Activated naive CD4-positive, alpha-beta T cell treated with anti-CD3 and anti-CD28 coated beads for 36 hours (primary cell): ENCODE measurements at regions of chr14 and their contacts with region 1.

Region 1: GRCh38 chr14:50060871-50061663 is 55.3 kb downstream of the VCPKMT start:
- DNase-seq: peak; percentile 64
- H3K4me3 Mint-ChIP-seq: peak overlapping the region; percentile 85
- H3K27ac Mint-ChIP-seq: peak overlapping the region; percentile 98
- H3K4me1 Mint-ChIP-seq: peaks cover 75% of the 10 kb centered on the region
- H3K27me3 Mint-ChIP-seq: no peaks in the 10 kb centered on the region

Region 2: DNA sequence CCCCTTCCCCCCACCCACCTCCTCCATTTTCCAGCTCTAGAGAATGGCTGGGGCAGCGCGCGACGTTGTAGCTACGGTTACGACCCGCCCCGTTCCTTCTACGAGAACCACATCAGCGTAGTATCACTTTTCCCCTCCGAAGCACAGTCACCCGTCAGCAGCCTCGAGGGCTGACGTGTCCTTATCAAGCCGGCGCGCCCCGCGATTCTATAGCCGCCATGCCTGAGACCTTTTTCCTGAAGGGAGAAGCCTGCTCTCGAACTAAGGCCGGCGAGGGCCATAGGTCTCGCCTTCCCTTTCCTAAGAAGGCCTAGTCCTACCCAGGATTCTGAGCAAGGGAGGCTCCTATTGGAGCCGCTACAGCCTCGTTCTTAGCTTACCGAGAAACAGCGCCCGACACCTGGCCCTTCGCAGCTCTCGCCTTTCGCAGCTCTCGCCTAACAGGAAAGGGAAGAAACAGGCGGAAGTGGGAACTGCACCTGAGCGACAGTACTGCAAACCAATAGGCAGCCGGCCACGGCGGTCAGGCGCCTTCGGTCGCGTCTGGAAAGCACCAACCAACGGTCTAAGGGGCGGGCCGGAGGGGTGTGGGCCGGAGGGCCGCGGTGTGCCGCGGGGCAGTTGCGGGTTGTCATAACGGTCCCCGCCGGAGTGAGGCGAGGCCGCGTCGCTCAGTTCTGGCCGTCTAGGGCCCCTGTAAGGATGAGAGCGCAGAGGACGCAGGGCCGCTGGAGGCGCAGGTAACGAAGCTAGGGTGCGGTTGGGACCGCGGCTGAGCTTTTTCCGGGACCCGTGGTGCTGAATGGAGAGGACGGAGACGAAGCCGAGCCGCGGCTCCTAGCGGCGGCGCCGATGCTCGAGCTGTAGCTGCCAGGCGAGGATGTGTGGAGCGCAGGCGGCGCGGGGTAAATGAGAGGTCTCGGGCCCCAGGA is 440.6 kb before region 1 on chr14 and contains the starts of genes MGAT2 and RPL36AL:
- CTCF ChIA-PET with region 1: no interaction called
- intact Hi-C with region 1: loop called (anchors 5 kb)
- DNase-seq: peak; percentile 97
- H3K4me3 Mint-ChIP-seq: peak within 1 kb of the TSS; percentile 97
- H3K27ac Mint-ChIP-seq: peak within 1 kb of the TSS; percentile 97
- H3K4me1 Mint-ChIP-seq: peaks cover 52% of the 10 kb centered on the region
- H3K27me3 Mint-ChIP-seq: no peaks in the 10 kb centered on the region
- total RNA-seq, gene MGAT2: 20.6 to 20.7 TPM
- total RNA-seq, gene RPL36AL: 250 to 266 TPM

Region 3: GRCh38 chr14:49879683-49880204 is 181.3 kb before region 1 on chr14:
- CTCF ChIA-PET with region 1: no interaction called
- intact Hi-C with region 1: loop called (anchors 1 kb)
- DNase-seq: peak; percentile 79
- H3K4me3 Mint-ChIP-seq: no peak overlapping the region
- H3K27ac Mint-ChIP-seq: peak overlapping the region; percentile 30
- H3K4me1 Mint-ChIP-seq: peaks cover 17% of the 10 kb centered on the region
- H3K27me3 Mint-ChIP-seq: no peaks in the 10 kb centered on the region

Region 4: DNA sequence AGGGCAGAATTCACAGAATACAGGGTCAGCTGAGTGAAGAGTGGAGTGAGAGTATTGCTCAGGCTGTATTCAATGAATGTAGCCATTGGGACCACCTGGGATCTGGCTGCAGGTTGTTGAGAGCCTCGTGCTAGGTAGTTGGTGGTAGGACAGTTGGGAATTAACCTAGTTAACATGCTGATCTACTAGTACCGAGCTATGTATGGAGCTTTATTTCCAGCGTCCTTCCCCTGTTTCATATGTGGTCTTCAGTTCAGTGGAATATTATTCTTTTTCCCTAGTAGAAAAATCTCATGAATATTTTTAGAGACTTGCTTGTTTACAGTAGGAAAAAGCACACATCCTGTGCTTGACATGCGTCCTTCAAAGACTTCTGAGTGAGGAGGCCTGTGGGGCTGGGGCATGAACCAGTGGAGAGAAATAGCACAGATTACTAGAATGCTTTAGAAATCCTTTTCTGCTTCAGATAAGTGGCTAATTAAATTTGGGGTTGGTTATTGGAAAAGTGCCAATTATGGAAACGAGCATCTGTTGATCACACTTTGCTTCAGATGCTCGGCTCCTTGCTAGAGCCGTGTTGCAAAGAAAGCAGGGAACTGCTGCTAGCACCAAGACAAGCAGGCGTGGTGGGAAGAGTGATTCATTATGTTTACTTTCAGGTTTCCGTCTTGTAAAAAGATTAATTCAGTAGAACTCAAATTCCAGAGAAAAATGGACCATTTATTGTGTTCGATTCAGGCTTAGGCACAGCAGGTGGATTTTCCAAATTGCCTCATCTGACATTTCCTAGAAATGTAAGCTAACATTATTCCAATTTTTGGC is 114.5 kb before region 1 on chr14:
- CTCF ChIA-PET with region 1: no interaction called
- intact Hi-C with region 1: loop called (anchors 1 kb)
- DNase-seq: peak; percentile 51
- H3K4me3 Mint-ChIP-seq: peak overlapping the region; percentile 44
- H3K27ac Mint-ChIP-seq: peak overlapping the region; percentile 62
- H3K4me1 Mint-ChIP-seq: peaks cover 64% of the 10 kb centered on the region
- H3K27me3 Mint-ChIP-seq: no peaks in the 10 kb centered on the region

Region 5: GRCh38 chr14:49992901-49993335 is 68.1 kb before region 1 on chr14:
- CTCF ChIA-PET with region 1: no interaction called
- intact Hi-C with region 1: no loop called
- DNase-seq: peak; percentile 42
- H3K4me3 Mint-ChIP-seq: no peak overlapping the region
- H3K27ac Mint-ChIP-seq: no peak overlapping the region
- H3K4me1 Mint-ChIP-seq: peaks cover 8% of the 10 kb centered on the region
- H3K27me3 Mint-ChIP-seq: no peaks in the 10 kb centered on the region

Region 6: DNA sequence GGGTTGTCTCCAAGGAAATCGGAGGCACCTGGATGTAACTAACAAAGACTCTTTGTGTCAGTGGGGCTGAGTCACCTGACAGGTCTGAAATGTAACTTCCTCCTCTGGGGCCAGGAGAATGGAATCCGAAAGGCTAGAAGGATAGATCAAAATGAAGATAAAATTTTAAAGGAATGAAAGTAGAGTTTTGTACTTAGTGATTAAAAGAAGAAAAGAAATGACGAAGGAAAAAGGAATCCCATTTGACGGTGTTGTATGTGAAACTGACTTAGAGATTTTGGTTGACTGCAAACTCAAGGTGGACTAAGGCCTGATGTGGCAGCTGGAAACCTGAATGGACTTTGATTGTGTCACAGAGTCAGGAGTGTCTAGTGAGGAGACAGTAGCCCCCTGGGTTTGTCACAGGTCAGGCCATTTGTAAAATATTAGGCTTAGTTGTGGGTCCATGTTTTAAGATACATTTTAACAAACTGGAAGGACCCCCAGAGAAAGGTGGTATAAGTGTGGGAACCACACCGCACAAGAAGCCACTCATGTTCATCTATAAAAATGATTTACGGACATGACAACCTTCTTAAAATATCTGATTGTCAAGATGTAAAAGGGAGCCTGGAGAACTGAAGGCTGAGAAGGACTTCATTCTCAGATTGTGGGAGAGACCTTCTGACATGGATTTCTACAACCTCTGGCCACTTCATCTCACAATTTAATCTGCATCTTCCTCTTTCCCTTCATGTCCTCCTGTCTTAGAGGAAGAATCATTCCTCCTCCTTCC is 47.3 kb before region 1 on chr14:
- CTCF ChIA-PET with region 1: no interaction called
- intact Hi-C with region 1: loop called (anchors 2 kb)
- DNase-seq: no peak
- H3K4me3 Mint-ChIP-seq: no peak overlapping the region
- H3K27ac Mint-ChIP-seq: no peak overlapping the region
- H3K4me1 Mint-ChIP-seq: peaks cover 31% of the 10 kb centered on the region
- H3K27me3 Mint-ChIP-seq: no peaks in the 10 kb centered on the region

Region 7: DNA sequence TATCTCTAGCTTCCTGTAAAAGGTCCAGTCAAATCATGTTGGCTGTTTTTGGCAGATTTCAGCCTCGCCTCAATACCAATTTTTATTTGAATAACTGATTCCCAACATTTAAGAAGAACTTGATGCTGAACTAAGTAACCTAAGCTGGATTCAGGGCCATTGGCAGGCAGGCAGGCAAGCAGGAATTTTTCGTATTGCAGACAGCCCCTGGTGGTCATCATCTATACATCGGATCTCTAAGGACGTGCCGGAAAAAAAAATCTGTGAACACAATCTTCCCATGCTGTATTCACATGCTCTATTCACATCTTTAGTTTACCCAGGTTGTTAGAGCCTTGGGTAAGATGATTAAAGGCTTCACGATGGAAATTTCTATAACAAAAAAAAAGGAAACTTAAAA is 48.3 kb after region 1 on chr14:
- CTCF ChIA-PET with region 1: interaction called, 10 read pairs
- intact Hi-C with region 1: loop called (anchors 1 kb)
- DNase-seq: no peak
- H3K4me3 Mint-ChIP-seq: no peak overlapping the region
- H3K27ac Mint-ChIP-seq: peak overlapping the region; percentile 59
- H3K4me1 Mint-ChIP-seq: peaks cover 43% of the 10 kb centered on the region
- H3K27me3 Mint-ChIP-seq: no peaks in the 10 kb centered on the region